Activated CD4-positive, alpha-beta memory T cell treated with anti-CD3 and anti-CD28 coated beads, Interleukin-2, amount 10 ng/mL, durations not matched to agents 7 days and 5 days (primary cell): ENCODE measurements at regions of chr20 and their contacts with region 1.

Region 1: DNA sequence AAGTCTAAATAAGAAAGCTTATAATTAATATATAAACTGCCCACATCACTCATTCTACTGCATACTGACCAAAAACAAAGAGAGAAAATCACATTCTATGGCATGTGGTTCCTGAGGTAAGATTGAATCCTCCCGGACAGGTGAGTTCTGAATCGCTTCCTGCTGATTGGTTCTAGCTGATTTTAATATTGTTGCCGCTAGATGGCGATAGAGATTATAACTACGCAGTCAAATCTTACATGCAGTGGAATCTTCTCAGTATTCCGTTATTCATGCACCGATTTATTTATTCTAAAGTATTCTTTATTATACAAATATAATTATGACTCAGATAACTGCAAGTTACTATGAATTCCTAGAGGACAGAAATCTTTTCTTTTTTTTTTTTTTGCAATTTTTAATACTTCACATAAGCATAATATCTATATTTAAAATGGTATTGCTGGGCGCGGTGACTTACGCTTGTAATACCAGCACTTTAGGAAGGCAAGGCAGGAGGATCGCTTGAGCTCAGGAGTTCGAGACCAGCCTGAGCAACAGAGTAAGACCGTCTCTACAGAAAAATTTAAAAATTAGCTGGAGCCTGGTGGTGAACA is 24.2 kb upstream of the TMX4 start:
- DNase-seq: no peak
- H3K4me3 Mint-ChIP-seq: no peak overlapping the region
- H3K27ac Mint-ChIP-seq: no peak overlapping the region
- H3K4me1 Mint-ChIP-seq: peaks cover 1% of the 10 kb centered on the region
- H3K27me3 Mint-ChIP-seq: peaks cover 21% of the 10 kb centered on the region

Region 2: GRCh38 chr20:7937328-7937727 is 106.5 kb before region 1 on chr20:
- CTCF ChIA-PET with region 1: interaction called, 13 read pairs
- POLR2A ChIA-PET with region 1: no interaction called
- DNase-seq: no peak
- H3K4me3 Mint-ChIP-seq: no peak overlapping the region
- H3K27ac Mint-ChIP-seq: no peak overlapping the region
- H3K4me1 Mint-ChIP-seq: no peaks in the 10 kb centered on the region
- H3K27me3 Mint-ChIP-seq: peaks cover 11% of the 10 kb centered on the region

Region 3: DNA sequence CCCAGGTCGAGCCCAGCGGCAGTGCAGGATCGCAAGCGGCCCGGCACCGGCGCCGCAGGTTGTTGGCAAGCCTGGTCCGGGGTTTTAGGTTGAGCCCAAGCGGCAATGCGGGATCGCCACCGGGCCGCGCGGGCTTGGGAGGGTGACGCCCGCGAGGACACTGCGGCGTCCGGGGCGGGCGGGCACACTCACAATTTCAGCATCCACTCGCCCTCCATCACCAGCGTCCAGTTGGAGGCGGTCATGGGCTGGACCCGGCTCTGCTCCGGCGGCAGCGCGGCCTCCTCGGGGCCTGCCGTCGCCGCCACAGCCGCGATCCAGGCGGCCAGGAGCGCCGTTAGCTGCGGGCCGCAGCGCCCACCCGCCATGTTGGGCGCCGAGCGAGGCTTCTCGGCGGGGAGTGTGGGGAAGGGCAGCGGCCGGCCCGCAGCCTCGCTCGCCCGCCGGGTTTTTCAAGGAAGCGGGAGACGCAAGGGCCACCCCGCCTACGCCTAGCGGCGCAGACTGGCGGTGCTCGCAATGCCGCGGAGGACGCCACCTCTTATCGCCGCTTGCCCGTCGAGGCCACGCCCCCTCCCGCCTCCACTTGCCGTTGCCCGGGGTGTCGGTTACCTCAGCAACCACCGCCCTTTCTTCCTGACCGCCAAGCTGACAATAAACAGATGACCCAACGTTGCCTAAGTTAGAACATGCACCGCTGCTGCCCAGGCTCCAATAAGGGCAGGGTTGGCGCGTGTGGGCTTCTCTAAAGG is 24.4 kb before region 1 on chr20 and contains the start of gene TMX4:
- CTCF ChIA-PET with region 1: interaction called, 15 read pairs
- POLR2A ChIA-PET with region 1: interaction called, 3 read pairs
- DNase-seq: peak; percentile 93
- H3K4me3 Mint-ChIP-seq: peak within 1 kb of the TSS; percentile 87
- H3K27ac Mint-ChIP-seq: peak within 1 kb of the TSS; percentile 78
- H3K4me1 Mint-ChIP-seq: peaks cover 23% of the 10 kb centered on the region
- H3K27me3 Mint-ChIP-seq: no peaks in the 10 kb centered on the region
- total RNA-seq, gene TMX4: 73.6 to 80.3 TPM